Ovary (tissue), 10 donors: ENCODE measurements at regions of chr12 and their contacts with region 1.

Region 1: DNA sequence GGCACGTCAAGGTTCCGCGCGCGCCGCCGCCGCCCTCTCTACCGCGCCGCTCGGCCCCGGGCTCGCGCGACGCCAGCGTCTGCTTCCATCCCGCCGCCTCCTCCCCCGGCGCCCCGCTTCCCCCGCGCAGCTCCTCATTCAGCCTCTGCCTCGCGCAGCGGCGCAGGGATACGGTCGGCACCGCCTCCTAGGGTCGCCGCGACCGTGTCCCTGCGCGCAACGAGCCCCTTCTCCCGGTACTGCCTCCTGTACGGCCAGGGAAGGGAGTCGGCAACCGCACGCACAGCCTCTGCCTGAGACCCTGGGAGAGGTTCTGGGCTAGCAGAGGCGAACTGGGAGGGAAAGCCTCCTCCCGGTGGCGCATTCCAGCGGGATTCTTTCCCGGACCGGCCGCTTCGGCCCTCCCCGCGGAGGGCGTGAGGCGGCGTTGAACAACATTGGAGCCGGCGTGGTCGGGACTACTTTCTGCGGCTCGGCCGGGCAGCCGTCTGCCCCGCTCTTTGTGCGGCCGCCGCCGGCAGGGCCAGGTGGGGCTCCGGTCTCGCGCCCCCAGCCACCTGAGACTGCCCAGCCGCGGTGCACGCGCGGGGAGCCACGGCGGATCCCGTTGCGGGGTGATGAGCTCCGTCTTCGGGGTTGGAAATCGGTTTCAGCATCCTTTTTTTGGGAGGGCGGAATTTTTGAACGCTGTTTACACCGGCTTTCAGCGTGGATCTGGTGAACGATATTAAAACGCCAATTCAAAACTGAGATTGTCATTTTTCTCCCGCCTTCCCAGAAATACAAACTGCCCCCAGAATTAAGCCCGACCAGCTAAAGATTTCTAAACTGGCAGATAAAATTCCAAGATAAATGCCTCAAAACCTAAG is at the start of gene LRP6:
- DNase-seq: peak; percentile 92 to 94 (median 93)
- H3K4me3 ChIP-seq: peak within 1 kb of the TSS; percentile 68
- H3K27ac ChIP-seq: peak within 1 kb of the TSS; percentile 100
- H3K4me1 ChIP-seq: peaks cover 7% of the 10 kb centered on the region
- H3K27me3 ChIP-seq: no peaks in the 10 kb centered on the region
- CTCF ChIP-seq: peak in 1 of 3 donors; percentile 56
- EP300 ChIP-seq: no peak
- POLR2A ChIP-seq: peak; percentile 79
- total RNA-seq, gene LRP6: 25.4 to 46.5 (median 44.7) TPM

Region 2: GRCh38 chr12:11031307-11031706 is 1235.8 kb before region 1 on chr12 and contains the start of gene TAS2R31:
- intact Hi-C with region 1: no loop called
- DNase-seq: no peak
- H3K4me3 ChIP-seq: no peak within 1 kb of the TSS
- H3K27ac ChIP-seq: no peak within 1 kb of the TSS
- H3K4me1 ChIP-seq: no peaks in the 10 kb centered on the region
- H3K27me3 ChIP-seq: peaks cover 2% of the 10 kb centered on the region
- CTCF ChIP-seq: no peak
- EP300 ChIP-seq: no peak
- POLR2A ChIP-seq: no peak
- total RNA-seq, gene TAS2R31: 2.4 to 8.6 (median 4.5) TPM

Region 3: GRCh38 chr12:12319451-12320183 is 52.5 kb after region 1 on chr12:
- intact Hi-C with region 1: loop called in 1 of 4 experiments (anchors 5 kb)
- DNase-seq: peak in 2 of 5 donors; percentile 34 to 40
- H3K4me3 ChIP-seq: peak overlapping the region; percentile 11
- H3K27ac ChIP-seq: peak overlapping the region in 1 of 2 donors; percentile 72
- H3K4me1 ChIP-seq: peaks cover 9% of the 10 kb centered on the region
- H3K27me3 ChIP-seq: no peaks in the 10 kb centered on the region
- CTCF ChIP-seq: no peak
- EP300 ChIP-seq: no peak
- POLR2A ChIP-seq: no peak